ENCODE measurements at regions of chr7 and their contacts with region 1.

Region 1: DNA sequence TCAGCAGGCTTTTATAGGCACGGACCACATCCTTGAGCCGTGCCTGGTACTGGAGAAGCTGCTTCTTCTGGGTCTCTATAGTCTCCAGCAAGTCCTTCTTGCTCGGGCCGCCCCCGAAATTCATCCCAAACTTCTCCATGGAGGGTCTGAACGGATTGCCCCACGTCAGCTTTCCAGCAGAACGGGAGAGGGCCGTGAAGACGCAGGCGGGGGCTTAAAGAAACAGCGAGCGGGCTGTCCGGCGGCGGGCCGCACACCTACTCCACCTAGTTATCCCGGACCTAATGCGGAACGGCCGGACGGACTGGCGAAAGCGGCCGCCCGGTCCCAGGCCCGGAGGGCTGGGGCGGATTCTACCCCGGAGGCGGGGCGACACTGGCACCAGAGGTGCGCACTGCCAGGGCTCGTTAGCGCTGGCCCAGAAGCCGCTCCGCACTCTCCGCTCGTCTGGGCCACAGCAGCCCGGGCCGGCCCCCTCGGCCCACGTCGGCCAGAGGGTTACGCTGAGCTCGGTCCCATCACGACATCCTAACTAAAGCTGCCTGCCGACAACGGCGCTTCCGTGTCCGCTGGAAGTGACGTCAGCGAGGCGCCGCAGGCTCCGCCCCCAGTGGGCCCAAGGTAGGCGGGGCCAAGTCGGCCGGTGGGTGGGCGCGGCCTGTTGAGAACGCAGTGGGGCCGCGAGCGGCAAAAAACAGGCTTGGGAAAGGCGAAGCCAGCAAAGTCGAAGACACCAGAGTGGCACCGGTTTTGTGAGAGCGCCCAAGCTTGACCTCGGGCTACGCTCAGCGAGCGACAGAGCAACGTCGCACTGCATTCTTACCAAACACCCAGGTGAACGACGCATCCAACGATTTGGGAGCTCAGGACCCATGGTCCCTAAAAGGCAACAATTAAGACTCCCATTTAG is at the start of gene GCC1:
- DNase-seq: no peak
- H3K4me3 ChIP-seq: peak within 1 kb of the TSS; percentile 55 to 68
- H3K27ac ChIP-seq: peak within 1 kb of the TSS; percentile 80
- H3K4me1 ChIP-seq: peaks cover 70% of the 10 kb centered on the region
- H3K27me3 ChIP-seq: no peaks in the 10 kb centered on the region
- CTCF ChIP-seq: no peak
- POLR2A ChIP-seq: peak; percentile 44 to 81
- total RNA-seq, gene GCC1: 10.8 TPM

Region 2: DNA sequence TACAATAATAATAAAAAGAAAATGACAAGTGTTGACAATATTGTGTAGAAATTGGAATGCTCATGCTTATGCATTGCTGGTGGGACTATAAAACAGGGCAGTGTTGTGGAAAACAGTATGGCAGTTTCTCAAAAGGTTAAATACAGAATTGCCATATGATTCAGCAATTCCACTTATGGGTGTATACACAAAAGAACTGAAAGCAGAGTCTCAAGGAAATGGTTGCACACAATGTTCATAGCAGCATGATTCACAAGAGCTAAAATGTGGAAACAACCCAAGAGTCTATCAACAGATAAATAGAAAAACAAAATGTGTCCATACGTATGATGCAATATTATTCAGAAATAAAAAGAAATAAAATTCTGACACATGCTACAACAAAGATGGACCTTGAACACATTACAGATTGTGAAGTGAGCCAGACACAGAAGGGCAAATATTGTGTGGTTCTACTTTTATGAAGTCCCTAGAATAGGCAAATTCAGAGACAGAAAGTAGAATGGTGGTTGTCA is 267.8 kb before region 1 on chr7:
- intact Hi-C with region 1: no loop called
- DNase-seq: no peak
- H3K4me3 ChIP-seq: no peak overlapping the region
- H3K27ac ChIP-seq: no peak overlapping the region
- H3K4me1 ChIP-seq: no peaks in the 10 kb centered on the region
- H3K27me3 ChIP-seq: no peaks in the 10 kb centered on the region
- CTCF ChIP-seq: no peak
- POLR2A ChIP-seq: no peak

Region 3: DNA sequence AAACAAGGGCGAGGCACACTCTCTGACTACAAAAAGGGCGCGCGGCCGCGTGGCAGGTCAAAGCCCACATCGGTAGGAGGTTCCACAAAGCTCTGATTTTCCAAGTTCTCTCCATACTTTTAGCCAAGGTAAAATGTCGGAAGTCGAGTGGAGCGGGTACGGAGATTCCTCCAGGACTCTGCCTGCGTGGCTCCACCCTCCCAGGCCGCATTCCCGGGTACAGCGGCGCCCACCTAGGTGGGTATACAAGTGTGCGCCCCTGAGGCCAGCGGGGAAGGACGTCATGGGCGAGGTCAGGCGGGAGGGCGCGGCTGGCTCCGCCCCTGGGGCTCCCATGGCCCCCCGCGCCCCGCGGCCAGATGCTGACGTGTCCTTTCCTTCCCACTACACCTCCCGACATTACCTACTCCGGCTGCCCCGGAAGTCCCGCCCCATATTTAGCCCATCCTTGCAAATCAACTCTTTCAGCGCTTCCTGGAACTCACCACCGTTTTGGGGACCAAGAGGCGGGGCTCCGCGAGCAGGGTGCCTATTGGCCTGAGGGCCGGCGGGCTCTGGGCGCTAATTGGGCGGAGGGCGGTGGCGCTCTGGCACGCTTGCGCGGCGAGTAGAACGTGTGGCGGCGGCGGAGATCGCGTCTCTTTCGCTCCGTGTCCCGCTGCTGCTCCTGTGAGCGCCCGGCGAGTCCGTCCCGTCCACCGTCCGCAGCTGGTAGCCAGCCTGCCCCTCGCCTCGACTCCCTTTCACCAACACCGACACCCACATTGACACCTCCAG is 66.4 kb after region 1 on chr7 and contains the start of gene SND1:
- intact Hi-C with region 1: loop called (anchors 5 kb)
- DNase-seq: peak; percentile 99 to 100
- H3K4me3 ChIP-seq: peak within 1 kb of the TSS; percentile 90
- H3K27ac ChIP-seq: peak within 1 kb of the TSS; percentile 90
- H3K4me1 ChIP-seq: peaks cover 42% of the 10 kb centered on the region
- H3K27me3 ChIP-seq: no peaks in the 10 kb centered on the region
- CTCF ChIP-seq: no peak
- POLR2A ChIP-seq: peak in 1 of 2 donors; percentile 56
- total RNA-seq, gene SND1: 85.9 TPM

Measured in vagina (tissue), 2 donors.